ENCODE measurements at regions of chr3 and their contacts with region 1.

Region 1: GRCh38 chr3:45499529-45499928 is 95.0 kb upstream of the LIMD1 start:
- DNase-seq: peak; percentile 34

Region 2: DNA sequence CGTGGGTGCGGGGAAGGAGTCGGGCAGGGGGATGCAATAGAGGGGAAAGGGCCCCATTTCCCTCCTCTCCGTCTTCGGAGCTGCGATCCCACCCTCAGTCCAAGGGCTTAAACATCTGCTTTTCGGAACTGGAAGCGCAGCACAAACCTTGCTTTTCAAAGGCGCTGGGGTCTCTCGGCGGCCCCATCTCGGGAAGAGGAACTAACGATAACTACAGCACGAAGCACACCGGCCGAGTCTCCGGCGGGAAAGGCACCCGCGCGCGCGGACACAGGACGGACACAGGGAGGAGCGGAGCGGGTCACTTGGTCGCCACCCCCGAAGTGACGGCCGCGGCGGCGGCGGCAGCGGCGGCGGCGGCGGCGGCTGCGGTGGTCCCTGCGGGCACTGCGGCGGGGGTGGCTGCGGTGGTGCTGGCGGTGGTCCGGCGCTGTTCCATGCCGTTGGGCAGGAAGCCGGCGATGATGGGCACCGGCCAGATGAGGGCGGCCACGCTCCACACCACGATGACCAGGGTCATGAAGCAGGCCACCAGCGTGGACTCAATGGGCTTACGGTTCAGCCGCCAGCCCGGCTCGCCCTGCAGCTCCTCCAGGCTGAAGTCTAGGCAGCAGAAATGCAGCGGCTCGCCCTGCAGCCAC is 274.6 kb before region 1 on chr3:
- in situ Hi-C with region 1: loop called (anchors 10 kb)
- DNase-seq: peak; percentile 55

Region 3: DNA sequence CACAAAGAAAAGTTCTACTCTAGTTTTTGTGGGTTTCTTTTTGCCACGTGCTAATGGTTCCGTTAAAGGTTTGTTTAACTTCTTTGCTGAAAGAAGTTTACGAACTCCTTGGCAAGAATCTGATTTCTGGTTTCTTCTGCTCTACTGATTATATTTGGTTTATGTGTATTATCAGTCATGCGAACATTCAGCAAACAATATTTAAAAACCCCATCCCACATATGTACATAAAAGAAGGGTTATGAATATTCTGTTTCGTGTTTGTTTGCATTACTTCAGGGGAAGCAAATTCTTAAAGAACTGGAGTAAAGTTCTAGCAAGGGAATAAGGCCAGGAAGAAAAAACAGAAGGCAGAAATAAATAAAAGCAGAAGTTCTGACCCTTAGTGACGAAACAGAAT is 101.4 kb before region 1 on chr3:
- in situ Hi-C with region 1: no loop called
- DNase-seq: no peak

Region 4: GRCh38 chr3:45915518-45916231 is 416.1 kb after region 1 on chr3:
- in situ Hi-C with region 1: no loop called
- DNase-seq: no peak

Measured in KBM-7 (cell line).